ENCODE measurements at regions of chr12 and their contacts with region 1.

Region 1: GRCh38 chr12:106223485-106224354 is 24.1 kb downstream of the CKAP4 start:
- DNase-seq: peak; percentile 49
- ATAC-seq: peak; percentile 74
- H3K4me3 Mint-ChIP-seq: no peak overlapping the region
- H3K27ac Mint-ChIP-seq: no peak overlapping the region
- H3K4me1 Mint-ChIP-seq: peaks cover 18% of the 10 kb centered on the region
- H3K27me3 Mint-ChIP-seq: peaks cover 18% of the 10 kb centered on the region
- CTCF ChIP-seq: peak; percentile 70

Region 2: DNA sequence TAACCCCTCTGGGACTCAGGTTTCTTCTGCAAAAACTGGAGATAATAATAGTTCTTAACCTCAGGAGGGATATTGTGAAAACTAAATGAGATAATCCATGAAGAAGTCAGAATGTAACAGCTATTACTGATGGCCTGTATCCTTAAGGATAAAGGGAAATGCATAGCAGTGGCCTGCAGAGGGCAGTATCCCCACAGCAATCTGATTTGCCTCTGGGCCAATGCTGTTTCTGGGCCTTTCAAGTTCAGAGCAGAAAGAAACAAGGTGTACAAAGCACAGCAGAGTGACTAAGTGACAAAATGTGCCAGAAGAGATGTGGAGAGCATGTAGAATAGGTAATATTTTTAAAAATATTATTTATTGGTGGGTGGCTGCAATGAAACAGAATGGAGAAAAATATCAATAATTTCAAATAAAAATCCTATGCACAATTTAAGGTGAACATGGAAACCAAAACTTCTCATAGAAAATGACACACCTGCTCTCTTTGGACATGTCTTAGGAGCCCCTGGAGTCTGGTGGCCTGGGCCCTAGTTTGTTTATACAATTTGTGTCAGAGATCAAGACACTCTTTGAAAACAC is 803.0 kb before region 1 on chr12:
- CTCF ChIA-PET with region 1: interaction called, 13 read pairs
- POLR2A ChIA-PET with region 1: no interaction called
- intact Hi-C with region 1: loop called (anchors 1 kb)
- DNase-seq: peak; percentile 31
- ATAC-seq: peak; percentile 62
- H3K4me3 Mint-ChIP-seq: no peak overlapping the region
- H3K27ac Mint-ChIP-seq: no peak overlapping the region
- H3K4me1 Mint-ChIP-seq: no peaks in the 10 kb centered on the region
- H3K27me3 Mint-ChIP-seq: peaks cover 13% of the 10 kb centered on the region
- CTCF ChIP-seq: peak; percentile 79

Region 3: DNA sequence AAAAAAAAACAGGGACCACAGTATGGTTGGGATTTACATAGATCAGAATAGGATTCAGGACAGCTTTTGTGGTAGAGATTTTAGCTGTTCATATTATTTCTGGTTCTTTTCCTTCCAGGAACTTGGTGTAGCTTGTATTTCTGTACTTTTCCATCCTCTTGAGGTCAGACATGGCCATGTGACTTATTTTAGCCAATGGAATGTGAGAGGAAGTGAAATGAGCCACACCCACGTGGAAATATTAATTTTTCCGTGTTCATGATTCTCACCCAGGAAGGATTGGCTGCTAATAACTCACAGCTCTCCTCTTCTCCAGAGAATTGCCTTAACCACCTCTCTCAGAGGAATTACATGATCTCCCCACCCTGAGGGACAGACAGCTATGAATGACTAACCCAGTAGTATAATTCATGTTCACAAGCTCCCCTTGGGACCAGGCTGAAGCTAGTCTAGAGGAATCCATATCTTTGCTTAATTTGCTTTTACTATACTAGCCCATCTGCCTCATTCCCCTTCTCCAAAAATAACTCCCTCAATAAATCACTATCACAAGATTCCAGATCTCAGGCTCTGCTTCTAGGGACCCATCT is 425.4 kb before region 1 on chr12:
- CTCF ChIA-PET with region 1: no interaction called
- POLR2A ChIA-PET with region 1: no interaction called
- intact Hi-C with region 1: no loop called
- DNase-seq: no peak
- ATAC-seq: no peak
- H3K4me3 Mint-ChIP-seq: no peak overlapping the region
- H3K27ac Mint-ChIP-seq: no peak overlapping the region
- H3K4me1 Mint-ChIP-seq: no peaks in the 10 kb centered on the region
- H3K27me3 Mint-ChIP-seq: no peaks in the 10 kb centered on the region
- CTCF ChIP-seq: no peak

Region 4: GRCh38 chr12:106066051-106066705 is 157.5 kb before region 1 on chr12:
- CTCF ChIA-PET with region 1: no interaction called
- POLR2A ChIA-PET with region 1: no interaction called
- intact Hi-C with region 1: no loop called
- DNase-seq: no peak
- ATAC-seq: no peak
- H3K4me3 Mint-ChIP-seq: no peak overlapping the region
- H3K27ac Mint-ChIP-seq: no peak overlapping the region
- H3K4me1 Mint-ChIP-seq: no peaks in the 10 kb centered on the region
- H3K27me3 Mint-ChIP-seq: no peaks in the 10 kb centered on the region
- CTCF ChIP-seq: no peak

Region 5: GRCh38 chr12:106276032-106276740 is 52.5 kb after region 1 on chr12:
- CTCF ChIA-PET with region 1: interaction called, 45 read pairs
- POLR2A ChIA-PET with region 1: interaction called, 5 read pairs
- intact Hi-C with region 1: no loop called
- DNase-seq: peak; percentile 29
- ATAC-seq: peak; percentile 92
- H3K4me3 Mint-ChIP-seq: peak overlapping the region; percentile 73
- H3K27ac Mint-ChIP-seq: peak overlapping the region; percentile 89
- H3K4me1 Mint-ChIP-seq: peaks cover 41% of the 10 kb centered on the region
- H3K27me3 Mint-ChIP-seq: peaks cover 3% of the 10 kb centered on the region
- CTCF ChIP-seq: no peak

Region 6: DNA sequence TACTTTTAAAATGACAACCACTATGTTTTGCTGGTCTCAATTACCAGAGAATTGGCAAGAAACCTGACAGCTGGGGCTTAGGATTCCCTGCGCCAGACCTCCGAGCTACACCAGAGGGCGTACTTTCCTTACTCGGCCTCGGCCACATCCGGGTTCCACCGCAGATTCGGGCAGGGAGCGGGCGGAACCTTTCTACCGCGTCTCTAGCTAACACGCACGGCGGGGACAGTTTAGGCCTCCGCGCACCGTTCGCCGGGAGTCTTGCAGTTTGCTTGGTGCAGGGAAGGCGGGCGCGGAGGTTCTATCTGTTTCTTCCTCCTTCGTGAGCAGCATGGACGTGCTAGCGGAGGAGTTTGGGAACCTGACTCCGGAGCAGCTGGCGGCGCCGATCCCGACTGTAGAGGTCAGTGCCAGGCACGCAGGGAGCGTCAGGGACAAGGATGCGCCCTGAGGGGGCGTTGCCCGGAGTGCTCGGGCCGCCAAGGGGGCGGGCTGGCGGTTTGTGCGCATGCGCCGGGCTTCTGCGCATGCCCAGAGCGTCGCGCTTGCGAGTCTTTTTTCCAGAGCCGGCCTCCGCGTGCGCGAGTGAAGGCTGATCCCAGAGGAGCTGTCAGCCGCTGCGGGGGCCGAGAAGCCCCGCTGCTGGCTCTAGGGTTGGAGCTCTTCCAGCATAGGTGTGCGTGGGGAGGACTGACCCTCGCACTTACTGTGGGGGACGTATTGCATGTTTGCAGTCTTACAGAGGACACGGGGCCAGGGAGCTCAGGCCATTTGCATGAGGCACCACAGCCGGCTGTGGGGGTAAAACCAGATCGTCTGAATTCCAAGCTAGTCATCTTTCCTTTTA is 134.1 kb after region 1 on chr12 and contains the start of gene POLR3B:
- CTCF ChIA-PET with region 1: interaction called, 17 read pairs
- POLR2A ChIA-PET with region 1: interaction called, 6 read pairs
- intact Hi-C with region 1: loop called (anchors 1 kb)
- DNase-seq: peak; percentile 96
- ATAC-seq: peak; percentile 92
- H3K4me3 Mint-ChIP-seq: peak within 1 kb of the TSS; percentile 95
- H3K27ac Mint-ChIP-seq: peak within 1 kb of the TSS; percentile 92
- H3K4me1 Mint-ChIP-seq: peaks cover 16% of the 10 kb centered on the region
- H3K27me3 Mint-ChIP-seq: no peaks in the 10 kb centered on the region
- CTCF ChIP-seq: peak; percentile 49
- total RNA-seq, gene POLR3B: 7.3 and 8.0 TPM in 2 replicates

Region 7: DNA sequence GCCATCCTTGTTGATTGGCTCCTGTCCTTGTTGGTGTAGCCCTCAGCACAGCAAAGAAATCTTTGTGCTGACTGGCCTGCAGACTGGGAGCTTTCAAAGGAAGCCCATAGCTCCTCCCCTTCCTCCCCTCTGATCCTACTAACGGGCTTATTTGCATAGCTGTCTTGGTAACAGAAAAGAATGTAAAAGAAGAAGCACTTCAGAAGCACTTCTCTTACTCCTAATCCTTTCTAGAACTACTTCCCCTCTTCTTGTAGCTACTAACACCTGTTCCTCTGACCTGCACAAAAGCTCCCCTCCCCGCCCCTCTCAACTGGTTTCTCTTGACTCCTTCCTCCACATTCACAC is 536.4 kb after region 1 on chr12:
- CTCF ChIA-PET with region 1: no interaction called
- POLR2A ChIA-PET with region 1: no interaction called
- intact Hi-C with region 1: no loop called
- DNase-seq: no peak
- ATAC-seq: peak; percentile 99
- H3K4me3 Mint-ChIP-seq: peak overlapping the region; percentile 70
- H3K27ac Mint-ChIP-seq: peak overlapping the region; percentile 88
- H3K4me1 Mint-ChIP-seq: peaks cover 24% of the 10 kb centered on the region
- H3K27me3 Mint-ChIP-seq: no peaks in the 10 kb centered on the region
- CTCF ChIP-seq: no peak

Region 8: DNA sequence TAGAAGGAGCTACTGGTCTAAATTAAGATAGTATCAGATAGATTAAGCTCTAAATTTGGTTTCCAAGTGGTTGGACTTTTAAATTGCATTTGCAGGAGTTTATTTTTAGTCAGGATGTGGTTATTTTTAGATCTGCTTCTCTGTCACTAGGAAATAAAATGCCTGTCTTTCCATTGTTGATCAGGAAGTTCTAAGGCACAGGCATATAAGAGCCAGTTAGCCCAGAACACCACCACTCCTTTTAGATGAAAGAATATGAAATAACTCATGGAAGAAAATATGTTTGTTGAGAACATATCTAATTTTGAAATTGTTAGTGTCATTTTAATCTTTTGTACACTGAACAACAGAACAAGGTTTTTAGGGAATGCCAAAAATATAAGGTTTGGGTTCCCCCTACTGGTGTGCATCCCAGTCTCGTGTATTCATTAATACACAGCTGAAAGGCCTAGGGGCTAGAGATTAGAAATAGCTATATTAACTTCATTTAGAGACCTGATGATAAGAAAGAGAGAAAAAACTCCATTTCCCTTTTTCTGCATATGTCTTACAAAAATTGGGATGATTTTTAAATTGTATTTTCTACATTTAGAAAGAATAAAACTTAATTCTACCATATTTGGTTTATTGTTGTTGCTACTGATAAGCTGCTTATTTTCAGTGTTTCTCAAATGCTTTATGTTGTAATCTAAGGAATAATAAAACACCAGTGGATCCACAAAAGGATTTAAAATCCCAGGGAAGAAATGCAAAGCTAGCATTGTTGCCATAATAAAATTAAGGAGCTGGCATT is 618.0 kb after region 1 on chr12:
- CTCF ChIA-PET with region 1: no interaction called
- POLR2A ChIA-PET with region 1: no interaction called
- intact Hi-C with region 1: loop called (anchors 5 kb)
- DNase-seq: no peak
- ATAC-seq: no peak
- H3K4me3 Mint-ChIP-seq: no peak overlapping the region
- H3K27ac Mint-ChIP-seq: no peak overlapping the region
- H3K4me1 Mint-ChIP-seq: no peaks in the 10 kb centered on the region
- H3K27me3 Mint-ChIP-seq: no peaks in the 10 kb centered on the region
- CTCF ChIP-seq: no peak

Measured in activated B cell treated with CpG ODN at 0.5 μM for 24 hours (primary cell).